Posterior vena cava (tissue), 2 donors: ENCODE measurements at regions of chr5 and their contacts with region 1.

Region 1: GRCh38 chr5:39714036-39714698 is 289.4 kb upstream of the DAB2 start:
- DNase-seq: no peak

Region 2: DNA sequence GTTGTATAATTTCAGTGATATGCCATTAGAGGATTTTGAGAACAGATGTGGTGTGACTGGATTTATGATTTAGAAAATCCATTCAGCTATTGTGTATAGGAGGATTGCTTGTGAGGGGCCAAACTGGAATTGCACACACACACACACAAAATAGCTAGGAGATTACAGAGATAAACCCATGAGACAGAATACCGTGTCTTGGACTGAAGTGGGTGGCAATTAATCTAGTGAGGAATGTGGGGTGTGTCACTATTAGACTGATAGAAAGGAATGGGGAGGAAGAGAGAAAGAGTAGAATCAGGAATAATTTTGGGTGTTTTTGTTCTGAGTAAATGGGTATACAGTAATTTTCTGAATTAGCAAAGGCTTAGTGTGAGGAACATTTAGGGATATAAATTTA is 15.0 kb before region 1 on chr5:
- intact Hi-C with region 1: no loop called
- DNase-seq: no peak

Region 3: DNA sequence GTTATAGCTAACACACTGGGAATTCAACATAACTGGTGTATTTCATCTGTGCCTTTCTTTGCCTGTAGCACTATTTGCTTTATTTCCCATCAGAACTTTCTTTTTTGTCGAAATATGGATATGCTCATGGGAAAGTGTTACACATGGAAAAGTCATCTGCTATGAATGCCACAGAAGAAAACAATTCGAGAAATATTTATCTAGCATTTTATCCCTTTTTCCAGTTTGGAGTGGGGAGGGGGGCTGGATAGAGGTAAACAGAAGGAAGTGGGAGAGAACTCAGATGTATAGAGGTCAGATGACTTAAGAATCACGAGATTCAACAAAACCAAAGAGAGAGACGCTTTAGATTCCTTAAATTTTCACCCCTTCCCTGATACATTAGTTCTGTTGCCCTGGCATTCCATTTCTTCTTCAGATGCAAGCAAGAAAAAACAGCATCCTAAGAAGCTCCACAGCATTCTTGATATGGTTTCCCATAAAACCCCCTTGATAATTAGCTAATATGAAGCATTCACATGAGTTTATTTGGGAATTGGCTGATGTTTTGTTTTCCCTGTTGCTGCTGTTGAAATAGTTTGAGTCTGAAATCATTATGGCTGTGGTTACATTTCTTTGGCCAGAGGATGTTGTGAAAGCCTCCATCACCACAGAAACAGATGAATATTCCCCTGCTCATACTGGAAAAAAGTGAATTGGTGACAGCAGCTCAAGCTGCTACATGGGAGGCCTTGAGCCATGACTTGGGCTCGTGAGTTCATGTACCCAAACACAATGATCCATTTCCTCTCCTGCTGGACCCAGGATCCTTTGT is 46.4 kb after region 1 on chr5:
- intact Hi-C with region 1: loop called in 1 of 2 experiments (anchors 2 kb)
- DNase-seq: no peak

Region 4: GRCh38 chr5:39977066-39977655 is 263.0 kb after region 1 on chr5:
- intact Hi-C with region 1: no loop called
- DNase-seq: no peak

Region 5: GRCh38 chr5:40694433-40694832 is 980.3 kb after region 1 on chr5:
- intact Hi-C with region 1: loop called in 1 of 2 experiments (anchors 10 kb)
- DNase-seq: no peak

Region 6: DNA sequence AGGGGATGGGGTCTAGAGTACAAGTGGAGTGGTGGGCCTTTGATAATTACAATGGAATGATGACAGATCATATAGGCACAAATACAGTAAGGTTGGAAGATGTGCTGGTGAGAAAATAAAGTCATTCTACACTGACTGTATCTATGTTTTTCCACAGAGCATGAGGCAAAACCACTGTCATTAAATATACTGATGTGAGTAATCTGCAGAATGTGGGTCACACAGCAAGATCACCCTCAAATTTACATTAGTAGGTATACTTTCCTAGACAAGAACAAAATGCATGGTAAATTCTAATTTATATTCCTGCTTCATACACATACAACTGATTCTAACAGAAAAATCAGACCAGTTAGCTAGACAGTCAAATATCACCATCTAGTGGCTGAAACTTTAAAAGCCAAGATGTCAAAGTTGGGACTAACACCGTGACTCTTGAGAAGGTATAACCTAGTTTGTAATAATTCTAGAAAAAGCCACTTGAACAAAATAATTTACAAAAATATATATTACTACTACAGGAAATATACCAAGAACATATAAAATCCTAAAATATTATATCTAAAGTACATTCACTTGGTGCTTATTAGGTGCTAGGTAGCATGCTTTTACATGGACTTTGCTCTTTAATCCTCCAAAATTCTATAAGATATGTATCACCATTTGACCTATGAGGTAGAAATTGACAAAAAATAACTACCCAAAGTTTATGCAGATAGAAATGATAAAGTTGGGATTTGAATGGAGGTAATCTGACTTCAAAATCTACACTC is 1022.1 kb after region 1 on chr5:
- intact Hi-C with region 1: loop called in 1 of 2 experiments (anchors 10 kb)
- DNase-seq: no peak